ENCODE measurements at regions of chr15 and their contacts with region 1.

Region 1: DNA sequence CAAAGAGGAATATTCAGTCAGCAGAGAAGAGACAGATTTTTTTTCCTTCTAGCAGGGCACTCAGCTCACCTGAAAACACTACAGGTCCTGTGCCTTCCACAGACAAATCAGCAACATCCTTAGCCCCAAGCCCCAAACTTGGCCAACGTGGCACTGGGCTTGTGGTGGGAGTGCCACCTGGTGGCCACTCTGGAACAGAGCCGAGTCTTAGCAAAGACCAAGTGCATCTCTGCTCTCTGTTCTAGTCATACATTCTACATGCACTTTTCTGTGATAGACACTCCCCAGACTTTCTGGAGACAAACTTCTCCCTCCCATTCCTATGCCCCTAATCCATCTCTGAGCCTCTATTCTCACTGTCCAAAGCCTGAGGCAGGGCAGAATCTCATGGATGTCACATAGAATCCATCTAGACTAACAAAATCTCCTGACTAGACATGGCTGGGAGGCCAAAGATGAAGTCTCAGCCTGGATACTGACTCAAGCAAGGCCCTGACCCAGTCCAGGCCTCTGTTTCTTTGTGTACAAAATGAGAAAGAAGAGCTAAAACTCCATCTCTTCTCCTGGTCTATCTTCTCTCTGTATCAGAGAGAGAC is 5.1 kb upstream of the SEMA7A start:
- DNase-seq: peak; percentile 85
- H3K4me3 Mint-ChIP-seq: no peak overlapping the region
- H3K27ac Mint-ChIP-seq: no peak overlapping the region
- H3K4me1 Mint-ChIP-seq: peaks cover 20% of the 10 kb centered on the region
- H3K27me3 Mint-ChIP-seq: no peaks in the 10 kb centered on the region

Region 2: DNA sequence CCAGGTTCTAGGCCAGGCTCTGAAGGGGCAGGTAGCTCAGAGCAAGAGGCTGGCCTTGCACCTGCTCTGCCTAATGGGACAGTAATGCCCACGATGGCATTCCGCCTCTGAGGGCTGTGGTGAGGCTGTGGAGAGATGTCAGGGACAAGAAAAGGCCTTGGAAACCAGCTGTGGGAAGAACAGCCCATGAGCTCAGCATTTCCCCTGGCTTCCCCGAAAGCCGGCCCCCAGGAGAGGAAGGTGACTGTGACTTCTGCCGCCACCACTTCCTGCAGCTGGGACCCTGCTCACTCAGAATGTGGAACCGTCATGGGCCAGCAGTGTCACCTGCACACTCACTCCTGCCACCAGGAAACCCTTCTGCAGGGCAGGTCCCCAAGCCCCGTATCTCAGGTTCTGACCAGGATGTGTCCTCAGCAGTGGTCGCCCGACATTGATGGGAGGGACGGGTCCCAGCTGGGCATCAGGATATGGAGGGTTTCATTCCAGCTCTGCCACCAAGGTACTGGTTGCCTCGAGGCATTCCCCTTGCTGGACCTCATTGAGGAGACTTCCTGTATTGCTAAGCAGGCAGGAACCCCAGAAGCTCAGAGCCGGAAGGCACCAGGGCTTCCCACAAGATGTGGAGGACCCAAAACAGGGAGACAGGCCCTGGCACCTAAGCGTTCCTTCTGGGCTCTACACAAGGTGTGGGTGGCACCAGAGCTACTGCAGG is 35.8 kb before region 1 on chr15:
- CTCF ChIA-PET with region 1: interaction called, 12 read pairs
- DNase-seq: peak; percentile 82
- H3K4me3 Mint-ChIP-seq: no peak overlapping the region
- H3K27ac Mint-ChIP-seq: peak overlapping the region; percentile 90
- H3K4me1 Mint-ChIP-seq: peaks cover 65% of the 10 kb centered on the region
- H3K27me3 Mint-ChIP-seq: no peaks in the 10 kb centered on the region

Region 3: GRCh38 chr15:74453925-74454763 is 15.3 kb after region 1 on chr15:
- CTCF ChIA-PET with region 1: interaction called, 12 read pairs
- DNase-seq: no peak
- H3K4me3 Mint-ChIP-seq: no peak overlapping the region
- H3K27ac Mint-ChIP-seq: no peak overlapping the region
- H3K4me1 Mint-ChIP-seq: peaks cover 31% of the 10 kb centered on the region
- H3K27me3 Mint-ChIP-seq: no peaks in the 10 kb centered on the region